ENCODE measurements at regions of chr1 and their contacts with region 1.

Region 1: DNA sequence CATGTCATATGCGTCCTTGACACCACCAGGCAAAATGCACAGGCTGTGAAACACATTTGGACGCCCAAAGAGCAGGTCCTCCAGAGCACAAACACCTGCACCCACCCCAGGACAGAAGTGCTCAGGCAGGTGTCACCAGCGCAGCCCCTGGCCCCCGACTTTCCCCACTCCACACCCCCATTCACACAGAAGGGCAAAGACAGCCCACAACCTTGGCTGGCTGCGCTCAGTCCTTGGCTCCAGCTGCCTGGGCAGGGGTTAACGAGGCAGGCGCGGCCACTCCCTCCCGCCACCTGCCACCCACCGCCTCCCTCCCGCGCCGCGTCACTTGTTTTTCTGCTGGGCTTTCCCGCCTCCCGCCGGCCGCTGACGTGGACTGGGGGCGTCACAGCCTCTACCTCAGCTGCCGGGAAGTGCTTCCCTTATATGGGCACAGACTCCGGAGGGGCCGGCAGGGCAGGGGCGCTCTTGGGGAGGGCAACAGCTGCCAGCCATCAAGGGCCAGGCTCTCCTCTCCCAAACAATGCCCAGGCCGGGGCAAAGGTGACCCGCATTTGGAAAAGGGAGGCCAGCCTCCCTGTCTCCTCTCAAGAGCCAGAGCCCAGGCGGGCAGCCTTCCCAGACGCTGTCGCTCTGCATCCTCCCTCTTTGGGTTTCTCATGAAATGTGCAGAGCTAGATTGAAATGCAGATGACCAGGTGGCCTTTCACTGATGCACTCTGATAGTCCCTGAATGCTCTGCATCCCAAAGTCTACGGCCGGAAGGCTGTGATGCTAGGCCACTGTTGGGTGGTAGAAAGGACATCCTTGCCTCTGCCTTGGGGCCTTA is 14.8 kb upstream of the BTG2 start:
- DNase-seq: peak; percentile 97
- ATAC-seq: peak; percentile 62
- H3K4me3 Mint-ChIP-seq: peak overlapping the region; percentile 75
- H3K27ac Mint-ChIP-seq: peak overlapping the region; percentile 99
- H3K4me1 Mint-ChIP-seq: peaks cover 68% of the 10 kb centered on the region
- H3K27me3 Mint-ChIP-seq: no peaks in the 10 kb centered on the region

Region 2: DNA sequence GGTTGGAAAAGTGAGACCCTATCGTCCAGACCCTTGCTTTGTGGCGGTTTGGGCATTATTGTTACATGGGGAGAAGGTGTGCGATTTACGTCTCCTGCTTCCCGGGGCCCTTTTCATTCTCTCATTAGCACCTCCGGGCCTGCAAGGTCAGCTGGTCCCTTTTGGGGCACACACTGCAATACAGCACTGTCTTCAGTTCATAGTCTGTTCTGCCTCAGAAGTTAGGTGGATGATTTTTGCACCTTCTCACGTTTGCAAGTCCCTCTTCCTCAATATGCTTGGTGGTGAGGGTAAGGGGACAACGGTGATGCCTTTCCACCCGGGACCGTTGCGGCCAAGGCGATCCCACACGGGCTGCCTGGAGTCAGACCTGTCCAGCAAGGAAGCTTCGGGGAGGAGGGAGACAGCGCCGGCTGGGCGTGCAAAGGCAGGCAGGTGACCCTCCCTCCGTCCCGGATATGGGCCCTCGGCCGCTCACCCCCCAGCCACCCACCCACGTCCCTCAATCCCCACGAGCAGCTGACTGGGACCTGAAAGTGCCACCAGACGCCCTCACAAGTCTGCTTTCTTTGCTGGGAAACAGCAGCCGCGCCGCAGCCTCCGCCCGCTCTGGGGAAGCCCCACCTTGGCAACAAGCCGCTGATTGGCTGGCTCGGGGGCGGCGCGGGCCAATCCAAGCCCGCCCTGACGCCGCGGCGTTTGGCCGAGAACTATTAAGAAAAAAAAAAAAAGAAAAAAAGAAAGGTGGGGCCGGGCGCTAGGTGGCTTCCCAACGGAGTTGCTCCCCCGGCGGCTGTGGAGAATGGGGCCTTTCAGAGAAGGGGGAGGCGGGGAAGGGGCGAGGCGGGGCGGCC is 36.6 kb after region 1 on chr1:
- CTCF ChIA-PET with region 1: interaction called, 81 read pairs
- DNase-seq: peak; percentile 96
- ATAC-seq: peak; percentile 91
- H3K4me3 Mint-ChIP-seq: peak overlapping the region; percentile 71
- H3K27ac Mint-ChIP-seq: peak overlapping the region; percentile 91
- H3K4me1 Mint-ChIP-seq: peaks cover 66% of the 10 kb centered on the region
- H3K27me3 Mint-ChIP-seq: no peaks in the 10 kb centered on the region

Region 3: DNA sequence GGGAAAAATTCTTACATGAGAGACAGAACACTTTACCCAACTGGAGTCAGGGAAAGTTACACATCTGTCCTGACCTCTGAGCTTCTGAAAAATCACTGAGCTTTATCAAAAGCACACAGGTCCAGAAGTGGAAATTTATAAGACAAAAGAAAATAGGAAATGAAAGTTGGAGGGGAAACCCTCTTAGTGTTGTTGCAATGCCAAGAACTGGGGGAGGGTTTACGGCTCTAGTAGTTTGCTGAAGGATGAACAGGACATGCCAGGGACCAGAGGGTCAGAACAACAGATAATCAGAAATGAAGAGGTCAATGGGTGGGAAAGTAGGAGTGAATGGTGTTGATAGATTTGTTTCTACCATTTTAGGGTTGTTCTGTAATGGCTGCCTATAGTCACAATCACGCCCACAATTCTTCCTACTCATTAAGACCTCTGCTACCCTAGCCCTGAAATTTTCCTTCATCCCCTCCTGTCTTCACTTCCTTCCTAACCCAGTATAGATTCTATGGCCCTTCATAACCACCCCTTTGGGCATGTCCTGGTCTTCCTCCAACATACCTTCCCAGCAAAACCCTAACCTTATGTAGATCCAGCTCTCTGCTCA is 90.8 kb after region 1 on chr1:
- CTCF ChIA-PET with region 1: no interaction called
- DNase-seq: no peak
- ATAC-seq: no peak
- H3K4me3 Mint-ChIP-seq: no peak overlapping the region
- H3K27ac Mint-ChIP-seq: no peak overlapping the region
- H3K4me1 Mint-ChIP-seq: no peaks in the 10 kb centered on the region
- H3K27me3 Mint-ChIP-seq: peaks cover 25% of the 10 kb centered on the region

Region 4: GRCh38 chr1:203480525-203481084 is 190.1 kb after region 1 on chr1:
- CTCF ChIA-PET with region 1: no interaction called
- DNase-seq: peak; percentile 68
- ATAC-seq: peak; percentile 57
- H3K4me3 Mint-ChIP-seq: no peak overlapping the region
- H3K27ac Mint-ChIP-seq: no peak overlapping the region
- H3K4me1 Mint-ChIP-seq: peaks cover 7% of the 10 kb centered on the region
- H3K27me3 Mint-ChIP-seq: peaks cover 21% of the 10 kb centered on the region

Measured in activated CD8-positive, alpha-beta memory T cell treated with anti-CD3 and anti-CD28 coated beads, Interleukin-2, amount 10 ng/mL, durations not matched to agents 7 days and 5 days (primary cell).